PC-9 (cell line): ENCODE measurements at regions of chr15 and their contacts with region 1.

Region 1: DNA sequence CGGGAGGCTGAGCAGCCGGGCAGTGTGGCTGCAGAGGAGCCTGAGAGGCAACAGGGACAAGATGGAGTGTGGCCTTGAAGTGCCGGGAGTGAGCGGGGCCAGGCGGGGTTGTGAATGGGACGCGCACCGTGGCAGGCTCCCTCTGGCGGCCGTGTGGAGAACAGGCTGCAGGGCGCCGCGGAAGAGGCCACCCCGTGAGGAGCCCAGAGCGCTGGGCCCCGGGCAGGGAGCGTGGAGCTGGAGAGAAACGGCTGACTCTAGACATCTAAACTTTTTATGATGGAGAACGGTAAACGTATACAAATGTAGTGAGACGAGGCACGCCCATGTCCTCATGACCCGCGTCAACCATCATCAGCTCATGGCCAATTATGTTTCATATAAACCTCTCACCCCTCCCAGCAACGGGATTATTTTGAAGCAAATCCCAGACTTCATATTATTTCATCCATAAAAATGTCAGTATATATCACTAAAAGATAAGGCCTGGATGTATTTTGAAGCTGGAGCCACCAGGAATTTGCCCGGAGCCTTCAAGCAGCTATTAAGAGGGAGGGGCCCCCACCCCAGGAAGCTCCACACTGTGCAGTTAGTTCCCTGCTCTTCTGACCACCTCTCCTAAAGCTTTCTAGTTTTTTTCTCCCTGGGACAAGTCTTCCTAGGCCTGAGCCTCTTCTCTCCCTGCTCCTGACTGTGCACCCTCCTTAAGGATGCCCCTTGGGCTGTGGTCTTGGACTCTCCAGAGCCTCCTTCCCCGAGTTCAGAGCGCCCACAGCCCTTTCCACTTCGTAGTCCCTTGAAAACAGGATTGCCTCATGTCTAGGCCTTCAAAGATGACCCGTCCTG is 149.4 kb downstream of the SMAD6 start:
- DNase-seq: peak in 1 of 2 experiments; percentile 71
- H3K4me3 ChIP-seq: no peak overlapping the region
- H3K27ac ChIP-seq: no peak overlapping the region
- H3K4me1 ChIP-seq: peaks cover 13% of the 10 kb centered on the region; the same call in 1 of the 2 replicates
- H3K27me3 ChIP-seq: no peaks in the 10 kb centered on the region
- CTCF ChIP-seq: peak; percentile 86

Region 2: GRCh38 chr15:66603301-66604179 is 247.9 kb before region 1 on chr15:
- CTCF ChIA-PET with region 1: interaction called, 3 read pairs
- POLR2A ChIA-PET with region 1: no interaction called
- intact Hi-C with region 1: loop called (anchors 1 kb)
- DNase-seq: peak in 1 of 2 experiments; percentile 59
- H3K4me3 ChIP-seq: no peak overlapping the region
- H3K27ac ChIP-seq: no peak overlapping the region
- H3K4me1 ChIP-seq: no peaks in the 10 kb centered on the region
- H3K27me3 ChIP-seq: no peaks in the 10 kb centered on the region
- CTCF ChIP-seq: peak; percentile 81

Region 3: GRCh38 chr15:66714543-66714981 is 136.9 kb before region 1 on chr15:
- CTCF ChIA-PET with region 1: interaction called, 18 read pairs
- POLR2A ChIA-PET with region 1: no interaction called
- intact Hi-C with region 1: no loop called
- DNase-seq: no peak
- H3K4me3 ChIP-seq: no peak overlapping the region
- H3K27ac ChIP-seq: no peak overlapping the region
- H3K4me1 ChIP-seq: peaks cover 13% of the 10 kb centered on the region
- H3K27me3 ChIP-seq: no peaks in the 10 kb centered on the region
- CTCF ChIP-seq: no peak

Region 4: GRCh38 chr15:66783327-66784124 is 67.9 kb before region 1 on chr15:
- CTCF ChIA-PET with region 1: interaction called, 14 read pairs
- POLR2A ChIA-PET with region 1: no interaction called
- intact Hi-C with region 1: loop called (anchors 2 kb)
- DNase-seq: no peak
- H3K4me3 ChIP-seq: no peak overlapping the region
- H3K27ac ChIP-seq: no peak overlapping the region
- H3K4me1 ChIP-seq: no peaks in the 10 kb centered on the region
- H3K27me3 ChIP-seq: no peaks in the 10 kb centered on the region
- CTCF ChIP-seq: no peak

Region 5: DNA sequence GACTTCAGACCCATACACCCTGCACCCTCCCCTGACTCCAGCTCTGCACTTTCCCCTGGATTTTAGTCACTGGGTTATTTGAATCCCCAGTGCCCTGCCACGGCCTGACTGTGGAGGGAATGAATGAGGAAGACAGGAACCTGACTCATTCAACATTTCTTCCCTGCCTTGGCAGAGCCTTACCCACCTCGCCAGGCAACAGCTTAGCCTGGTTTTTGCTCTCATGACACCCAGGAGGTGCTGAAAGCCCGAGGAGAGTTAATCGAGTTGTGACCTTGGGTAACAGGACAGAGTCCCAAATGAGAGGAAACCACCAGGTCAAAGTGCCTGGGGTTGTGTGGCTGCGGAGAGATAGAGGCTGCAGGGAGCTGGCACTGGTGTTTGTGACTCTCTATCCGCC is 21.1 kb before region 1 on chr15:
- CTCF ChIA-PET with region 1: interaction called, 5 read pairs
- POLR2A ChIA-PET with region 1: interaction called, 3 read pairs
- intact Hi-C with region 1: loop called (anchors 1 kb)
- DNase-seq: peak; percentile 73 to 88
- H3K4me3 ChIP-seq: no peak overlapping the region
- H3K27ac ChIP-seq: peak overlapping the region; percentile 77
- H3K4me1 ChIP-seq: peaks cover 61% of the 10 kb centered on the region
- H3K27me3 ChIP-seq: no peaks in the 10 kb centered on the region
- CTCF ChIP-seq: no peak

Region 6: GRCh38 chr15:66955871-66956585 is 104.6 kb after region 1 on chr15:
- CTCF ChIA-PET with region 1: no interaction called
- POLR2A ChIA-PET with region 1: no interaction called
- intact Hi-C with region 1: no loop called
- DNase-seq: peak; percentile 75 to 89
- H3K4me3 ChIP-seq: no peak overlapping the region
- H3K27ac ChIP-seq: peak overlapping the region; percentile 62
- H3K4me1 ChIP-seq: peaks cover 23% of the 10 kb centered on the region
- H3K27me3 ChIP-seq: no peaks in the 10 kb centered on the region
- CTCF ChIP-seq: no peak